CD8-positive, alpha-beta memory T cell (primary cell): ENCODE measurements at regions of chr14 and their contacts with region 1.

Region 1: GRCh38 chr14:50003213-50004031 is 110.5 kb downstream of the ARF6 start:
- DNase-seq: peak; percentile 73 to 92 (median 79)
- H3K4me3 ChIP-seq: peak overlapping the region; percentile 82
- H3K4me3 Mint-ChIP-seq: peak overlapping the region; percentile 79 to 92 (median 81)
- H3K27ac ChIP-seq: peak overlapping the region; percentile 100
- H3K27ac Mint-ChIP-seq: peak overlapping the region; percentile 95 to 100 (median 99)
- H3K4me1 ChIP-seq: peaks cover 52% of the 10 kb centered on the region
- H3K4me1 Mint-ChIP-seq: peaks cover 51 to 74% (median 63%) of the 10 kb centered on the region in 3 donors
- H3K27me3 ChIP-seq: no peaks in the 10 kb centered on the region
- H3K27me3 Mint-ChIP-seq: peaks cover 0 to 1% of the 10 kb centered on the region in 2 donors

Region 2: GRCh38 chr14:49852301-49853157 is 150.9 kb before region 1 on chr14 and contains the start of gene NEMF:
- CTCF ChIA-PET with region 1: interaction called, 25 read pairs
- POLR2A ChIA-PET with region 1: interaction called, 24 read pairs
- DNase-seq: peak; percentile 59 to 82 (median 72)
- H3K4me3 ChIP-seq: peak within 1 kb of the TSS; percentile 93
- H3K4me3 Mint-ChIP-seq: peak within 1 kb of the TSS; percentile 94 to 99 (median 96)
- H3K27ac ChIP-seq: peak within 1 kb of the TSS; percentile 79
- H3K27ac Mint-ChIP-seq: peak within 1 kb of the TSS; percentile 83 to 99 (median 96)
- H3K4me1 ChIP-seq: peaks cover 28% of the 10 kb centered on the region
- H3K4me1 Mint-ChIP-seq: peaks cover 40 to 51% (median 50%) of the 10 kb centered on the region in 3 donors
- H3K27me3 ChIP-seq: no peaks in the 10 kb centered on the region
- H3K27me3 Mint-ChIP-seq: no peaks in the 10 kb centered on the region
- total RNA-seq, gene NEMF: 69.2 to 71.9 TPM

Region 3: GRCh38 chr14:49879683-49880204 is 123.7 kb before region 1 on chr14:
- CTCF ChIA-PET with region 1: interaction called, 41 read pairs
- POLR2A ChIA-PET with region 1: no interaction called
- DNase-seq: peak in 4 of 5 donors; percentile 34 to 72 (median 56)
- H3K4me3 ChIP-seq: no peak overlapping the region
- H3K4me3 Mint-ChIP-seq: no peak overlapping the region
- H3K27ac ChIP-seq: no peak overlapping the region
- H3K27ac Mint-ChIP-seq: peak overlapping the region in 6 of 8 donors; percentile 36 to 96 (median 62)
- H3K4me1 ChIP-seq: peaks cover 11% of the 10 kb centered on the region
- H3K4me1 Mint-ChIP-seq: peaks cover 3 to 12% (median 10%) of the 10 kb centered on the region in 3 donors
- H3K27me3 ChIP-seq: no peaks in the 10 kb centered on the region
- H3K27me3 Mint-ChIP-seq: no peaks in the 10 kb centered on the region

Region 4: GRCh38 chr14:49946320-49947141 is 56.9 kb before region 1 on chr14:
- CTCF ChIA-PET with region 1: interaction called, 4 read pairs
- POLR2A ChIA-PET with region 1: interaction called, 13 read pairs
- DNase-seq: peak in 1 of 5 donors; percentile 22
- H3K4me3 ChIP-seq: peak overlapping the region; percentile 32
- H3K4me3 Mint-ChIP-seq: peak overlapping the region in 6 of 7 donors; percentile 63 to 86 (median 65)
- H3K27ac ChIP-seq: no peak overlapping the region
- H3K27ac Mint-ChIP-seq: peak overlapping the region; percentile 77 to 99 (median 93)
- H3K4me1 ChIP-seq: peaks cover 43% of the 10 kb centered on the region
- H3K4me1 Mint-ChIP-seq: peaks cover 64 to 84% (median 83%) of the 10 kb centered on the region in 3 donors
- H3K27me3 ChIP-seq: no peaks in the 10 kb centered on the region
- H3K27me3 Mint-ChIP-seq: no peaks in the 10 kb centered on the region

Region 5: GRCh38 chr14:50038398-50039119 is 35.1 kb after region 1 on chr14:
- CTCF ChIA-PET with region 1: interaction called, 15 read pairs
- POLR2A ChIA-PET with region 1: interaction called, 29 read pairs
- DNase-seq: peak in 1 of 5 donors; percentile 56
- H3K4me3 ChIP-seq: no peak overlapping the region
- H3K4me3 Mint-ChIP-seq: peak overlapping the region; percentile 32 to 87 (median 66)
- H3K27ac ChIP-seq: no peak overlapping the region
- H3K27ac Mint-ChIP-seq: peak overlapping the region; percentile 87 to 99 (median 94)
- H3K4me1 ChIP-seq: peaks cover 53% of the 10 kb centered on the region
- H3K4me1 Mint-ChIP-seq: peaks cover 48 to 67% (median 56%) of the 10 kb centered on the region in 3 donors
- H3K27me3 ChIP-seq: no peaks in the 10 kb centered on the region
- H3K27me3 Mint-ChIP-seq: no peaks in the 10 kb centered on the region

Region 6: GRCh38 chr14:50070840-50071548 is 67.6 kb after region 1 on chr14:
- CTCF ChIA-PET with region 1: no interaction called
- POLR2A ChIA-PET with region 1: no interaction called
- DNase-seq: no peak
- H3K4me3 ChIP-seq: no peak overlapping the region
- H3K4me3 Mint-ChIP-seq: no peak overlapping the region
- H3K27ac ChIP-seq: no peak overlapping the region
- H3K27ac Mint-ChIP-seq: peak overlapping the region in 4 of 8 donors; percentile 5 to 83 (median 57)
- H3K4me1 ChIP-seq: peaks cover 7% of the 10 kb centered on the region
- H3K4me1 Mint-ChIP-seq: peaks cover 14 to 34% (median 30%) of the 10 kb centered on the region in 3 donors
- H3K27me3 ChIP-seq: no peaks in the 10 kb centered on the region
- H3K27me3 Mint-ChIP-seq: no peaks in the 10 kb centered on the region

Region 7: GRCh38 chr14:50085570-50086320 is 82.3 kb after region 1 on chr14:
- CTCF ChIA-PET with region 1: interaction called, 31 read pairs
- POLR2A ChIA-PET with region 1: interaction called, 18 read pairs
- DNase-seq: peak; percentile 21 to 54 (median 44)
- H3K4me3 ChIP-seq: peak overlapping the region; percentile 7
- H3K4me3 Mint-ChIP-seq: peak overlapping the region; percentile 6 to 89 (median 71)
- H3K27ac ChIP-seq: peak overlapping the region; percentile 35
- H3K27ac Mint-ChIP-seq: peak overlapping the region; percentile 89 to 99 (median 97)
- H3K4me1 ChIP-seq: peaks cover 93% of the 10 kb centered on the region
- H3K4me1 Mint-ChIP-seq: peaks cover 75 to 93% (median 86%) of the 10 kb centered on the region in 3 donors
- H3K27me3 ChIP-seq: no peaks in the 10 kb centered on the region
- H3K27me3 Mint-ChIP-seq: no peaks in the 10 kb centered on the region